CD4-positive, alpha-beta T cell (primary cell): ENCODE measurements at regions of chr2 and their contacts with region 1.

Region 1: GRCh38 chr2:179020156-179020750 is 29.7 kb downstream of the CCDC141 start:
- DNase-seq: peak in 13 of 14 experiments; percentile 2 to 45 (median 25)
- ATAC-seq: peak; percentile 98
- H3K4me3 ChIP-seq: no peak overlapping the region
- H3K4me3 Mint-ChIP-seq: no peak overlapping the region
- H3K27ac ChIP-seq: no peak overlapping the region
- H3K27ac Mint-ChIP-seq: no peak overlapping the region
- H3K4me1 ChIP-seq: no peaks in the 10 kb centered on the region
- H3K4me1 Mint-ChIP-seq: peaks cover 27% of the 10 kb centered on the region
- H3K27me3 ChIP-seq: no peaks in the 10 kb centered on the region
- H3K27me3 Mint-ChIP-seq: no peaks in the 10 kb centered on the region
- CTCF ChIP-seq: peak; percentile 55

Region 2: GRCh38 chr2:178891265-178891958 is 128.8 kb before region 1 on chr2:
- CTCF ChIA-PET with region 1: no interaction called
- POLR2A ChIA-PET with region 1: no interaction called
- intact Hi-C with region 1: loop called in 1 of 2 experiments (anchors 1 kb)
- DNase-seq: peak; percentile 1 to 76 (median 46)
- ATAC-seq: peak; percentile 71
- H3K4me3 ChIP-seq: no peak overlapping the region
- H3K4me3 Mint-ChIP-seq: no peak overlapping the region
- H3K27ac ChIP-seq: no peak overlapping the region
- H3K27ac Mint-ChIP-seq: no peak overlapping the region
- H3K4me1 ChIP-seq: no peaks in the 10 kb centered on the region
- H3K4me1 Mint-ChIP-seq: peaks cover 5% of the 10 kb centered on the region
- H3K27me3 ChIP-seq: no peaks in the 10 kb centered on the region
- H3K27me3 Mint-ChIP-seq: no peaks in the 10 kb centered on the region
- CTCF ChIP-seq: peak; percentile 93